Lower lobe of right lung (tissue), 2 donors: ENCODE measurements at regions of chr12 and their contacts with region 1.

Region 1: DNA sequence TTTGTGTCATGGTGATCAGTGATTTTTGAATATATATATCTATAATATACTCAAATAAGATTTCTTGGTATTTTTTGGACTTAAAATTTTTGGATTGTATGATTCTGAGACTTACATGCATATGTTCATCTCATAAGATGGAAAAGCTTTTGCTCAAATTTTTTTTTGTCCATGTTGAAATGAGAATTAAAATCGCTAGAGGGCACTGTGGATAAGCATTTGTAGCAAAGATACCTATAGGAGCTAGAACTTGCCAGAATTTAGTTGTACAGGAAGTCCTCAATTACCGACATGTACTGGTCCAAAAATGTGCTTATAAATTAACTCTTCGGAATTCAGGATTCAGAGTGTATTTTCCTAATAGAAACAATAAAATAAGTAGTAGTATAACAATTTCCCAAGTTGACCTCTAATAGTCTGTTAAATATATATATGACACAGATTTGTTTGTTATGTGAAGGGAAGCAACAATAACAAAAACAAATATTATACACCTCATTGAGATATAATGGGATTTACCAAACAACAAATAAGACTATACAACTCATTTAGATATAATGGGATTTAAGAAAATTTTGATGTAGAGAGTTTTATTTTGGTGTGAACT is 179.6 kb downstream of the TMEM117 start:
- DNase-seq: no peak
- ATAC-seq: peak in 1 of 2 donors; percentile 72
- H3K4me3 ChIP-seq: no peak overlapping the region
- H3K27ac ChIP-seq: no peak overlapping the region
- H3K4me1 ChIP-seq: no peaks in the 10 kb centered on the region
- H3K27me3 ChIP-seq: no peaks in the 10 kb centered on the region
- CTCF ChIP-seq: peak; percentile 59

Region 2: DNA sequence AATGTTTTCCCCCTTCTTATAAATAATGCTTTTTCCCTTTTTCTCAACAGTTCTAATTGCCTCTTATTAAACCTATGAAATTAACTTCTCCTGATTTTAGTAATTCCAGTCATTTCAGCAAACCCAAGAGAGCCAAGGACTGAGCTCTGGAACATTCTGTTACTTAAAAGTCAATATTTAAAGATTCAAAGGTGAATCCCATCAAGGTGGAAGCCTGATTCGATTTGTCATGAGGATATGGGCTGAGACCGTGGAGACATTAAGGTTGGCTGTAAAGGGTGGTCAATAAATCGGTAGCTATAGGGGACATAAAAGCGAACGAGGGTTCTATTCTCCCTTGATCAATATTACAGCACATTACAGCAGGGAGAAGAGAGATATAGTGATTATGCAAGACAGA is 927.3 kb after region 1 on chr12:
- intact Hi-C with region 1: loop called (anchors 10 kb)
- DNase-seq: no peak
- ATAC-seq: no peak
- H3K4me3 ChIP-seq: no peak overlapping the region
- H3K27ac ChIP-seq: no peak overlapping the region
- H3K4me1 ChIP-seq: no peaks in the 10 kb centered on the region
- H3K27me3 ChIP-seq: no peaks in the 10 kb centered on the region
- CTCF ChIP-seq: no peak